Vagina (tissue), 2 donors: ENCODE measurements at regions of chr2 and their contacts with region 1.

Region 1: DNA sequence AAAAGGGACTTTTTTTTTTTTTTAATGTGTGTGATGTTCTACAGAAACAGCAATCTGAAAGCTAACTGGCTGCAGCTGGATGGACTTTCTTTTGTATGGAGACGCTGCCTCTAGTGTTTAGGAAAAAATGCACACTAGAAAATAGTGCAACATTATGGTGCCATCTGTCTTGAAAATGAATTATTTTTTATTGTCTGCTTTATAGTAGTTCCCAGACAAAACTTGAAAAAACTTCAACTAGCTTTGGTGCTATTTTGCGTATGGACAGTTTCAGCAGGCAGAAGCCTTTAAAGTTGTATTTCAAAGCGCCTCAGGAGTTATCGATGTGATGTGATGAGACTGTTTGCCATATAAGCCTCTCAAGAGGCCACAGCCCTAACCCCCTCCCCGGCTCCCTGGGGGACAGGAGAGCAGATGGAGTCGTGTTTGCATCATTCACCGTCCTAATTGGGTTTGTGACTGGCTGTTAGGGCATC is 86.9 kb downstream of the LTBP1 start:
- DNase-seq: no peak
- H3K4me3 ChIP-seq: peak overlapping the region in 1 of 2 donors; percentile 17
- H3K27ac ChIP-seq: peak overlapping the region; percentile 54
- H3K4me1 ChIP-seq: peaks cover 6% of the 10 kb centered on the region
- H3K27me3 ChIP-seq: no peaks in the 10 kb centered on the region
- CTCF ChIP-seq: peak; percentile 55 to 59 (median 59)
- POLR2A ChIP-seq: no peak

Region 2: GRCh38 chr2:32772638-32773447 is 260.8 kb before region 1 on chr2:
- intact Hi-C with region 1: loop called (anchors 10 kb)
- DNase-seq: no peak
- H3K4me3 ChIP-seq: no peak overlapping the region
- H3K27ac ChIP-seq: no peak overlapping the region
- H3K4me1 ChIP-seq: no peaks in the 10 kb centered on the region
- H3K27me3 ChIP-seq: no peaks in the 10 kb centered on the region
- CTCF ChIP-seq: peak in 2 of 3 experiments; percentile 36 to 54
- POLR2A ChIP-seq: no peak

Region 3: GRCh38 chr2:33441235-33441810 is 407.7 kb after region 1 on chr2:
- intact Hi-C with region 1: loop called (anchors 5 kb)
- DNase-seq: no peak
- H3K4me3 ChIP-seq: no peak overlapping the region
- H3K27ac ChIP-seq: no peak overlapping the region
- H3K4me1 ChIP-seq: no peaks in the 10 kb centered on the region
- H3K27me3 ChIP-seq: no peaks in the 10 kb centered on the region
- CTCF ChIP-seq: peak; percentile 15 to 41 (median 27)
- POLR2A ChIP-seq: no peak